Calu3 (cell line): ENCODE measurements at regions of chr17 and their contacts with region 1.

Region 1: DNA sequence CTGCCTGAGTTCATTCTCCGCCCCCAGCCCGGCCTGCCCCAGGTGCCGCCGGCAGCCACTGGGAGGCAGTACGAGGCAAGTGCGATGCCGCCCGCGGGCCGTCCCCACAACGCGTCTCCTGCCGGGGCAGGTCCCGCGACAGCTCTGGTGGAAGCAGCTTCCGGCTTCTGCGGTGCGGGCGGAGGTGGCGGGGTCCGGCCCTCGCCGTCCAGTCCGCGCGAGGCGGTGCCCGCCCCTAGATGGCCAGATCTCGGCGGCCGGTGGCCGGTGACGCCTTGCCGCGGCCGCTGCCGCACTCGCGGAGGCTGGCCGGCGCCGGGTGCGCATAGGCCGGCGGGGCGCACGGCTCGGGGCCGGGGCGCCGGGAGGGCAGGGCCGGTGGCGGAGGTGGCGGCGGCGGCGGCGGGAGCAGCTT is 1.8 kb downstream of the GJD3 start:
- DNase-seq: peak; percentile 100
- H3K4me3 Mint-ChIP-seq: peak overlapping the region; percentile 81
- H3K27ac Mint-ChIP-seq: no peak overlapping the region
- H3K4me1 Mint-ChIP-seq: peaks cover 39% of the 10 kb centered on the region
- H3K27me3 Mint-ChIP-seq: peaks cover 9% of the 10 kb centered on the region
- CTCF ChIP-seq: no peak

Region 2: DNA sequence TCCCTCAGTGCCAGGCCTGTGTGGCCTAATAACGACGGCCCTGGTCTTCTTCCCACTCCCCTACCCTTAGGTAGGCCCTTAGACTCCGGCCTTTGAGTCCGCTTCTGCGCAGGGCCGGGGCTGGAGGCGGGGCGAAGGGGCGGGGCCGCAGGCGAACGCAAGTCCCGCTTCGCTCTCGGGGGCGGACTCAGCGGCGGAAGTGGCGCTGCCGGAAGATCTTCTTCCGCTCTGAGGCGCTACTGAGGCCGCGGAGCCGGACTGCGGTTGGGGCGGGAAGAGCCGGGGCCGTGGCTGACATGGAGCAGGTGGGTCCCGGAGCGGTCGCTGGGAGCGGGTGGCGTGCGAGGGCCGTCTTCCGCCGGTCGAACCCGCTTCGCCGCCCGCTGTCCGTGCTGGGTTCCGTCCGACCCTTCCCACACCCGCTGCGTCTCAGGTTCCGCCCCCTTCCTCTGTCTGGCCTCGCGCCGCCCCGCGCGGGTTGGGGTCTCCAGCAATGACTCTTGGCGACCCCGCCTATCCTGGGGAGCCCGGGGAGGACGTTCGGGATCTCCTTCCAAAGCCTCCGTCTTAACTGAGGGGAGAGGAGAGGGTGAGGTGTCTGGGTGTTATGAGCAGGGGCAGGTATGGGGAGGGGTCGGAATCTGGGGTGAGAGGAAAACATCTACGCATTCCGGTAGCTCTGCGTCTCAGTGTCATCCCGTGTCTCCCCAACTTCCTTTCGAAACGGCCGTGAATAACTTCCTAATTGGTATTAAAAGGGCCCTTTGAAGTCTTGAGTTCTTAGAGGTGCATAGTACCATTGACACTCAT is 725.6 kb before region 1 on chr17 and contains the start of gene STARD3:
- CTCF ChIA-PET with region 1: no interaction called
- intact Hi-C with region 1: loop called (anchors 5 kb)
- DNase-seq: no peak
- H3K4me3 Mint-ChIP-seq: peak within 1 kb of the TSS; percentile 71
- H3K27ac Mint-ChIP-seq: peak within 1 kb of the TSS; percentile 28
- H3K4me1 Mint-ChIP-seq: peaks cover 61% of the 10 kb centered on the region
- H3K27me3 Mint-ChIP-seq: peaks cover 5% of the 10 kb centered on the region
- CTCF ChIP-seq: no peak
- total RNA-seq, gene STARD3: 2,579 and 2,697 TPM in 2 replicates

Region 3: DNA sequence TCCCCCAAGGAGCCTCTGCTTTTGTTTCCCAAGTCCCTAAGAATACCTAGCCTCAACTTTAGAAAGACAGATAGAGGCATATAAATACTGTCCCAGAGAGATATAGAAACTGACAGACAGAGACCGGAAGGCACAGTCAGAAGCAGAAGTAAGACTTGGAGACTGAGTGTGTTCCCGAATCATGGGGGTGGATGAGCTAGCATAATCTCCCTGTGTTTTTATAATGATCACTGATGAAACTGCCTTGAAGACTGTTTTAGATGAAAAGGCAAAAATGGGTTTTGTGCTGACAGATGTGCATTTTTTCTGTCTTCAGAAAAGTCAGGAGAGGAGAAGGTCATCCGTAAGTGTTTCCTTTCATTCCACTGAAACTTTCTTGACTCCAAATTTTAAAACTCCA is 390.4 kb before region 1 on chr17:
- CTCF ChIA-PET with region 1: no interaction called
- intact Hi-C with region 1: no loop called
- DNase-seq: no peak
- H3K4me3 Mint-ChIP-seq: no peak overlapping the region
- H3K27ac Mint-ChIP-seq: no peak overlapping the region
- H3K4me1 Mint-ChIP-seq: peaks cover 17% of the 10 kb centered on the region
- H3K27me3 Mint-ChIP-seq: peaks cover 84% of the 10 kb centered on the region
- CTCF ChIP-seq: no peak

Region 4: DNA sequence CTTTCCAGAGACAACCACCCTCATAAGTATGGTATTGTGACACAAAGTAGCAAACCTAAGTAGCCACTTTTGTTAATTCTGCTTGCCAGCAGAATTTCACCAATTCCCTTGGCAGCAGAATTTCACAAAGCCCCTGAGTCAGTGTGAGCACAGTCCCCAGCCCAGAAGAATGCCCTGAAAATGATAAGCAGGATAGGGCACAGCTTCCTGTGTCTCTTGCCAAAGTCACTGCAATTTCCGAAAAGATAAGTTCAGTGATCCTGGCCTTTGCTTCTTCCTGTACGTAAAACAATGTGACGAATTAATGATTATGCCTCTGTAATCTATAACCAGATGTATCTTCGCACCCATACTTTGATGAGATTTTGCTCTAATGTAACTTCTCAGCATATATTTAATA is 159.6 kb before region 1 on chr17:
- CTCF ChIA-PET with region 1: interaction called, 59 read pairs
- intact Hi-C with region 1: loop called (anchors 1 kb)
- DNase-seq: no peak
- H3K4me3 Mint-ChIP-seq: no peak overlapping the region
- H3K27ac Mint-ChIP-seq: no peak overlapping the region
- H3K4me1 Mint-ChIP-seq: peaks cover 7% of the 10 kb centered on the region
- H3K27me3 Mint-ChIP-seq: no peaks in the 10 kb centered on the region
- CTCF ChIP-seq: no peak

Region 5: DNA sequence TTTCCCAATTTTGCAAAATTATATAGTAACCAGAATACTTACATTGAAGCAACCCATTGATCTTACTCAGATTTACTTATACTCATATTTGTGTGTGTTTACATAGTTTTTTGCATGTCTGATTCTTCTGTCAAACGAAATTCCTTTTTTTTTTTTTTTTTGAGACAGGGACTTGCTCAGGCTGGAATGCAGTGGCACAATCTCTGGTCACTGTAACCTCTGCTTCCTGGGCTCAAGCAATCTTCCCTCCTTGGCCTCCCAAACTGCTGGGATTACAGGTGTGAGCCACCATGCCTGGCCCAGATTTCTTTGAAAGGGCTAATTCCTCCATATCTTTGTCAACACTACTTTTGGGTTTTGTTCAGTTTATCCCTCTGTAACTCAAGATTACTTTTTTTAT is 25.0 kb after region 1 on chr17:
- CTCF ChIA-PET with region 1: interaction called, 10 read pairs
- intact Hi-C with region 1: no loop called
- DNase-seq: no peak
- H3K4me3 Mint-ChIP-seq: no peak overlapping the region
- H3K27ac Mint-ChIP-seq: no peak overlapping the region
- H3K4me1 Mint-ChIP-seq: no peaks in the 10 kb centered on the region
- H3K27me3 Mint-ChIP-seq: no peaks in the 10 kb centered on the region
- CTCF ChIP-seq: no peak

Region 6: DNA sequence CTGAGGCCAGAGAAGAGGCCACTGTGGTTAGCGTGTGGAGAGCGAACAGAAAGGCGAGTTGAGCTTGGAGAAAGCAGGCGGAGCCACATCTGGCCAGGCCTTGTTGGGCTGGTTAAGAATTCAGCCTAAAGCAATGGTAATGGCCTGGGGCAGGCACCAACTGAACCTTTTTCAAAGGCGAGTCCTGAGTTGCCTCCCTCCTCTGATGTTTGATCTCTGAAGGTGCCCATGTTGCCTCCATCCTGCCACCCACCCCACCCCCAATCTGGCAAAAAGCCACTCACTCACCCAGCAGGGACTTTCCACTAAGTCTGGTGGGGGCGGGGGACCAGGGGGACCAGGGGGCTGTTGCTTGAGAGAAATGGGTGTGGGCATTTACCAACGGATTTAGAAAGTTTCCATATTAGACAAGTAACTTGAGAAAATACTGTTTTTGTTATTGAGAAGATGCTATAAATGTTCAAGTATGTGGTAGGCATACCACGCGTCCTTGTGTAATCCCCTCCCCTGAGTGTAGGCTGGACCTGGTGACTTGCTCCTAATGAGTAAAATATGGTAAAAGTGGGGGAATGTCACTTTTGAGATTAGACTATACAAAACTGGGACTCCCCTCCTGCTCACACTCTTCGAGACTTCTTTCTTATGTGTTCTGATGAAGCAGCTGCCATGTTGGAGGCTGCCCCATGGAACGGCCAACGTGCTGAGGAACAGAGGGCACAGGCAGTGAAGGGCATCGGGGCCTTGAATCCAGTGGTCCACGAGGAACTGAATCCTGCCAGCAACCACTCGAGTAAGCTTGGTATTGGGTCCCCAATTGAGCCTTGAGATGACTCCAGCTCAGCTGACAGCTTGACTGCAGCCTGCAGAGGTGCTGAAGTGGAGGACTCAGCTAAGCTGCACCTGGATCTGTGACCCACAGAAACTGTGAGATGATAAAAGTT is 168.6 kb after region 1 on chr17:
- CTCF ChIA-PET with region 1: interaction called, 222 read pairs
- intact Hi-C with region 1: loop called (anchors 1 kb)
- DNase-seq: no peak
- H3K4me3 Mint-ChIP-seq: no peak overlapping the region
- H3K27ac Mint-ChIP-seq: no peak overlapping the region
- H3K4me1 Mint-ChIP-seq: peaks cover 19% of the 10 kb centered on the region
- H3K27me3 Mint-ChIP-seq: peaks cover 48% of the 10 kb centered on the region
- CTCF ChIP-seq: no peak

Region 7: GRCh38 chr17:40559954-40560591 is 197.4 kb after region 1 on chr17:
- CTCF ChIA-PET with region 1: interaction called, 117 read pairs
- intact Hi-C with region 1: loop called (anchors 1 kb)
- DNase-seq: peak; percentile 100
- H3K4me3 Mint-ChIP-seq: peak overlapping the region; percentile 47
- H3K27ac Mint-ChIP-seq: no peak overlapping the region
- H3K4me1 Mint-ChIP-seq: peaks cover 17% of the 10 kb centered on the region
- H3K27me3 Mint-ChIP-seq: peaks cover 99% of the 10 kb centered on the region
- CTCF ChIP-seq: no peak

Region 8: GRCh38 chr17:40818733-40819527 is 456.2 kb after region 1 on chr17:
- CTCF ChIA-PET with region 1: interaction called, 31 read pairs
- intact Hi-C with region 1: no loop called
- DNase-seq: peak; percentile 100
- H3K4me3 Mint-ChIP-seq: peak overlapping the region; percentile 80
- H3K27ac Mint-ChIP-seq: peak overlapping the region; percentile 92
- H3K4me1 Mint-ChIP-seq: peaks cover 31% of the 10 kb centered on the region
- H3K27me3 Mint-ChIP-seq: no peaks in the 10 kb centered on the region
- CTCF ChIP-seq: no peak